Activated naive CD4-positive, alpha-beta T cell treated with anti-CD3 and anti-CD28 coated beads for 36 hours (primary cell): ENCODE measurements at regions of chr11 and their contacts with region 1.

Region 1: GRCh38 chr11:11876458-11876857 is 34.7 kb downstream of the USP47 start:
- DNase-seq: peak; percentile 17
- H3K4me3 Mint-ChIP-seq: no peak overlapping the region
- H3K27ac Mint-ChIP-seq: no peak overlapping the region
- H3K4me1 Mint-ChIP-seq: peaks cover 46% of the 10 kb centered on the region
- H3K27me3 Mint-ChIP-seq: no peaks in the 10 kb centered on the region

Region 2: GRCh38 chr11:11848891-11849746 is 27.3 kb before region 1 on chr11:
- CTCF ChIA-PET with region 1: interaction called, 16 read pairs
- intact Hi-C with region 1: loop called (anchors 2 kb)
- DNase-seq: peak; percentile 80
- H3K4me3 Mint-ChIP-seq: no peak overlapping the region
- H3K27ac Mint-ChIP-seq: peak overlapping the region; percentile 46
- H3K4me1 Mint-ChIP-seq: peaks cover 51% of the 10 kb centered on the region
- H3K27me3 Mint-ChIP-seq: no peaks in the 10 kb centered on the region

Region 3: GRCh38 chr11:11856638-11857037 is 19.8 kb before region 1 on chr11:
- CTCF ChIA-PET with region 1: interaction called, 7 read pairs
- intact Hi-C with region 1: loop called (anchors 2 kb)
- DNase-seq: peak; percentile 56
- H3K4me3 Mint-ChIP-seq: no peak overlapping the region
- H3K27ac Mint-ChIP-seq: peak overlapping the region; percentile 70
- H3K4me1 Mint-ChIP-seq: peaks cover 72% of the 10 kb centered on the region
- H3K27me3 Mint-ChIP-seq: no peaks in the 10 kb centered on the region

Region 4: GRCh38 chr11:11864803-11865202 is 11.7 kb before region 1 on chr11:
- CTCF ChIA-PET with region 1: interaction called, 4 read pairs
- intact Hi-C with region 1: loop called (anchors 1 kb)
- DNase-seq: no peak
- H3K4me3 Mint-ChIP-seq: no peak overlapping the region
- H3K27ac Mint-ChIP-seq: no peak overlapping the region
- H3K4me1 Mint-ChIP-seq: peaks cover 62% of the 10 kb centered on the region
- H3K27me3 Mint-ChIP-seq: no peaks in the 10 kb centered on the region

Region 5: GRCh38 chr11:11931461-11932055 is 55.1 kb after region 1 on chr11:
- CTCF ChIA-PET with region 1: no interaction called
- intact Hi-C with region 1: no loop called
- DNase-seq: peak; percentile 10
- H3K4me3 Mint-ChIP-seq: no peak overlapping the region
- H3K27ac Mint-ChIP-seq: no peak overlapping the region
- H3K4me1 Mint-ChIP-seq: no peaks in the 10 kb centered on the region
- H3K27me3 Mint-ChIP-seq: no peaks in the 10 kb centered on the region

Region 6: DNA sequence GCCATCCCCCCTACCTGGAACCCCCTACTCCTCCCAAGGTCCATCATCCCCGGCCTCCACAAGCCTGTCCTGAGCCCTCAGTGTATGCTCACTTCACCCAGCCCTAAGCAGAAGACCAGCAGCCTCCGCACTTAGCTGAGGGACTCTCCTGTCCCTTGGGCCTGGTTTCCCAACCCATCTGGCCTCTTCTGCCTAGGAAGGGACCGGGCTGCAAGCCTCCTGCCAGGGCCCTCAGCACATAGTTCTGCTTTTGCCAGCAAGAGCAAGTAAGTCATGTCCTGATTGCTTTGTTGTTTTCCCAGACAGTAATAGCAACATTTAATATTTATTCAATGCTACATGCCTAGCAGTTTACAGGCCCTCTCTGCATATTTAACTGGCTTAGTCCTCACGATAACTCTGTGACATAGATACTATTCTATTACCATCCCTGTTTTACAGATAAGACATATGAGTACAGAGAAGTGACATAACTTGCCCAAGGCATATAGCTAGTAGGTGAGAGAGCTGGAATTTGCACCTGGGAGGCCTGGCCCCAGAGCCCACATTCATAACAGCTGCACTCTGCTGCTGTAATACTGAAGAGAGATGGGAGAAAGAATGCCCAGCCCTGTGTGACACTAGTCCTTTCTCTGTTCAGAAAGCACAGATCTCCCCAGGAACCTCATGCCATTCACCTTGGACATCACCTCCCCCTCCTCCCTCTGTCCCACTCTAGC is 640.1 kb after region 1 on chr11:
- CTCF ChIA-PET with region 1: no interaction called
- intact Hi-C with region 1: no loop called
- DNase-seq: no peak
- H3K4me3 Mint-ChIP-seq: no peak overlapping the region
- H3K27ac Mint-ChIP-seq: no peak overlapping the region
- H3K4me1 Mint-ChIP-seq: no peaks in the 10 kb centered on the region
- H3K27me3 Mint-ChIP-seq: no peaks in the 10 kb centered on the region